HEK293 (cell line): ENCODE measurements at regions of chr2 and their contacts with region 1.

Region 1: GRCh38 chr2:231900486-231900942 is 25.7 kb downstream of the NPPC start:
- H3K4me3 ChIP-seq: no peak overlapping the region
- H3K27ac ChIP-seq: no peak overlapping the region
- H3K4me1 ChIP-seq: no peaks in the 10 kb centered on the region
- CTCF ChIP-seq: peak; percentile 54; the same call in 1 of the 2 replicates

Region 2: GRCh38 chr2:231800493-231801091 is 99.9 kb before region 1 on chr2:
- CTCF ChIA-PET with region 1: interaction called, 15 read pairs
- POLR2A ChIA-PET with region 1: no interaction called
- H3K4me3 ChIP-seq: no peak overlapping the region
- H3K27ac ChIP-seq: no peak overlapping the region
- H3K4me1 ChIP-seq: no peaks in the 10 kb centered on the region
- CTCF ChIP-seq: no peak; the same call in 1 of the 2 replicates

Region 3: GRCh38 chr2:231854671-231855070 is 45.8 kb before region 1 on chr2:
- CTCF ChIA-PET with region 1: interaction called, 67 read pairs
- POLR2A ChIA-PET with region 1: interaction called, 3 read pairs
- H3K4me3 ChIP-seq: no peak overlapping the region
- H3K27ac ChIP-seq: no peak overlapping the region
- H3K4me1 ChIP-seq: no peaks in the 10 kb centered on the region
- CTCF ChIP-seq: no peak

Region 4: GRCh38 chr2:231883468-231883881 is 17.0 kb before region 1 on chr2:
- CTCF ChIA-PET with region 1: interaction called, 15 read pairs
- POLR2A ChIA-PET with region 1: interaction called, 4 read pairs
- H3K4me3 ChIP-seq: no peak overlapping the region
- H3K27ac ChIP-seq: peak overlapping the region; percentile 5; the same call in 1 of the 2 replicates
- H3K4me1 ChIP-seq: peaks cover 23% of the 10 kb centered on the region
- CTCF ChIP-seq: no peak

Region 5: DNA sequence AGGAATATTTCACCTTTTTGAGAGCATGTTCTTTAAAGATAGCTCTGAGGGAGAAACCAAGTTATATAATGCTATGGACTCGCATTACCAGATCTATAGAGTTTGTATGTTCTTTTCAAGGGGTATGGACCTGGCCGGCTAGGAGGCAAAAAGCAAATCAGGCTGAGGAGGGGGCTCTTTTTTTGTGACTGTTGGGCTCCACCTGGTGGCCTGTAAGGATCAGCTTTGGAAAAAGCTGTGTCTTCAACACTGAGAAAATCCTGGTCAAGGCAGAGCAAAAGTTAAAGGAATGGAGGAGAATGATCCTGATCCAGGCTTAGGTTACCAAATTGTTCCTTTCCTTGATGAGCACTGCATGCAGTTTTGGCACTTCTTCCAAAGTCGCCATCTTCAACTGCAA is 241.5 kb after region 1 on chr2:
- CTCF ChIA-PET with region 1: interaction called, 26 read pairs
- POLR2A ChIA-PET with region 1: no interaction called
- H3K4me3 ChIP-seq: no peak overlapping the region
- H3K27ac ChIP-seq: no peak overlapping the region
- H3K4me1 ChIP-seq: no peaks in the 10 kb centered on the region
- CTCF ChIP-seq: peak; percentile 54; the same call in 1 of the 2 replicates

Region 6: DNA sequence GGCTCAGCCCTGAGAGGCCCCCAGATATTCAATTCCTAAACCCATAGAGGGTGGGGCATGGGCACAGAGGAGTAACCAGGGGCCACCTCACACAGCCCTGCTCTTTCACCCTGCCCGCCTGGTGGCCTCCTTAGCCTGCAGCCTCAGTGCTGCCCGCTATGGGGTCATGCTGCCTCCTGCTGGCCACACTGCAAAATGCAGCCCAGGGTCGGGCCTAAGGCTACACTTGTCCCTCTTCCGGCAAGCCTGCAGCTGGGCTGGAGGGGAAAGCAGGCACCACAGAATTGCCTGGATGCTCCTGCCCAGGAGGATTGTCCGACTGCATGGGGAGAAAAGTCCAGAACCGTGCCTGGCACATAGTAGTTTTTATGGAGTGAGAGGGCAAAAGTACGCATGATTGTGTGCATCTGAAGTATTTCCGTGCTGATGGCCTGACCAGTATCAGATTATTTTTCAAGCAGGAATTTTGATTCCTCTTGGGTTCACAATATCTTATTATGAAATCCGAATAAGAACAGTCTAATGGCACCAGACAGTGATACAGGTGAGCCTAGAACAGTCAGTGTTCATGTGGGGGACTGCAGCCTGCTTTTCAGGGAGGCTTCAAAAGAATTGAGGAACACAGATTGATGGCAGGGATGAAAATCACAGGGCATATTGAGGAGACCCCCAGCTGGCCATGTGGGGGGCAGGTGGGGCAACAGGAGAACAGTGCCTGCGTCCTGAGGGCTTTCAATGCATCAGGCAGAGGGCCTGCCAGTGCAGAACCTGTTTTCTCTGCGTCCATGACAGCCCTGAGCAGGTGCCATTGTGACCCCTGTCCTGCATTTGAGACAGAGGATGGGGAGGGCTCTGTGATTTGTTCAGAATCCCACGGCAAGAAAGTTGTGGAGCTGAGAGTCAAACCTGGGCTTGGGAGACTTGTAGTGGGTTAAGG is 426.9 kb after region 1 on chr2:
- CTCF ChIA-PET with region 1: interaction called, 37 read pairs
- POLR2A ChIA-PET with region 1: no interaction called
- H3K4me3 ChIP-seq: no peak overlapping the region
- H3K27ac ChIP-seq: no peak overlapping the region
- H3K4me1 ChIP-seq: no peaks in the 10 kb centered on the region
- CTCF ChIP-seq: peak; percentile 54; the same call in 1 of the 2 replicates

Region 7: GRCh38 chr2:232444409-232445148 is 544.1 kb after region 1 on chr2:
- CTCF ChIA-PET with region 1: interaction called, 13 read pairs
- POLR2A ChIA-PET with region 1: no interaction called
- H3K4me3 ChIP-seq: no peak overlapping the region
- H3K27ac ChIP-seq: no peak overlapping the region
- H3K4me1 ChIP-seq: no peaks in the 10 kb centered on the region
- CTCF ChIP-seq: peak; percentile 28; the same call in 1 of the 2 replicates